B cell (primary cell): ENCODE measurements at regions of chr1 and their contacts with region 1.

Region 1: DNA sequence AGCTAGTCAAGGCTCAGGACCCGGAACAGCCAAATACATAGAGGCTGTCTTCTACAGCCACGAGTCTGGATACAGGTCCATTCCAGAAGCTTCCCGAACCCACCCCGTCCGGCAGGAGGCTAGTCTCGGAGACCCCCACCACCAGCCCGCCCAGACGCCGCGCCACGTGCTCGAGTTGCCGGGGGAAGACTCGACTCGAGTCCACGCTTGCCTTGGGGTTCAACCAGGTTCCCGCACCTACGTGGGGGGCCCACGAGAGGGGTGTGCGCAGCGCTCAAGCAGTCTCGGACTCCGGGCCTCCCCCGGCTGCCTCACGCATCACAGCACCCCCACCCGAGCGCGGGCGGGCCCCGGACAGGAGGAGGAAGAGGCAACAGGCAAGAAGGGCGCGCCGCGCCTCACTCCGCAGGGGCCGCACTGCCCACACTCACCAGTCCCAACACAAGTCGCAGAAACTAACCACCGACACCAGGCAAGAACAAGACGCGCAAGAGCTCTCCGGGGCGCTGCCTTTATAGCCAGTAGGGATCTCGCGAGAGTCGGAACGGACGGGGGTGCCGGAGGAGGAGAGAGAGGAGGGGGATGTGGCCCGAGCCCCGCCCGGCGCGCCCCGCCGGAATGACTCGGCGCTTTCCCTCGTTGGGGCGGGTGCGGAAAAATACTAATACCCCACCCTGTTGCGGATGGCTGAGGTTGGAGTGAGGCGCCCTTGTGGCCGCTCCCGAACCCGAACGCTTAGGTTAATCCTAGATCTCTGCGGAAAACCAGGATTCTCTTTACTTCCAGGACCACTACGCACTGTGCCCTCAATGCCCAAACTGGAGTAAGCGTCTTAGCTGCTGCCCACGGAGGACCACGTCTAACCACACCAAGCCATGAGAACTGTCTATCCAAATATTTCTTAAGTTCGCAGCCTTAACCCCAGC is at the start of gene PRDX1:
- DNase-seq: peak; percentile 98
- ATAC-seq: peak; percentile 86
- H3K4me3 ChIP-seq: peak within 1 kb of the TSS; percentile 75 to 97 (median 82)
- H3K4me3 Mint-ChIP-seq: peak within 1 kb of the TSS; percentile 95
- H3K27ac ChIP-seq: peak within 1 kb of the TSS; percentile 80 to 82
- H3K27ac Mint-ChIP-seq: peak within 1 kb of the TSS; percentile 98
- H3K4me1 ChIP-seq: peaks cover 16 to 31% of the 10 kb centered on the region in 2 donors
- H3K4me1 Mint-ChIP-seq: peaks cover 34% of the 10 kb centered on the region
- H3K27me3 ChIP-seq: no peaks in the 10 kb centered on the region
- H3K27me3 Mint-ChIP-seq: no peaks in the 10 kb centered on the region
- CTCF ChIP-seq: no peak
- total RNA-seq, gene PRDX1: 96.5 and 104 TPM in 2 replicates

Region 2: GRCh38 chr1:45543581-45544417 is 22.1 kb after region 1 on chr1:
- CTCF ChIA-PET with region 1: interaction called, 4 read pairs
- POLR2A ChIA-PET with region 1: interaction called, 15 read pairs
- intact Hi-C with region 1: no loop called
- DNase-seq: peak; percentile 94
- ATAC-seq: peak; percentile 90
- H3K4me3 ChIP-seq: peak overlapping the region in 4 of 5 experiments; percentile 22 to 56 (median 30)
- H3K4me3 Mint-ChIP-seq: peak overlapping the region; percentile 81
- H3K27ac ChIP-seq: peak overlapping the region; percentile 78 to 97
- H3K27ac Mint-ChIP-seq: peak overlapping the region; percentile 82
- H3K4me1 ChIP-seq: peaks cover 38 to 57% of the 10 kb centered on the region in 2 donors
- H3K4me1 Mint-ChIP-seq: peaks cover 46% of the 10 kb centered on the region
- H3K27me3 ChIP-seq: no peaks in the 10 kb centered on the region
- H3K27me3 Mint-ChIP-seq: no peaks in the 10 kb centered on the region
- CTCF ChIP-seq: no peak

Region 3: DNA sequence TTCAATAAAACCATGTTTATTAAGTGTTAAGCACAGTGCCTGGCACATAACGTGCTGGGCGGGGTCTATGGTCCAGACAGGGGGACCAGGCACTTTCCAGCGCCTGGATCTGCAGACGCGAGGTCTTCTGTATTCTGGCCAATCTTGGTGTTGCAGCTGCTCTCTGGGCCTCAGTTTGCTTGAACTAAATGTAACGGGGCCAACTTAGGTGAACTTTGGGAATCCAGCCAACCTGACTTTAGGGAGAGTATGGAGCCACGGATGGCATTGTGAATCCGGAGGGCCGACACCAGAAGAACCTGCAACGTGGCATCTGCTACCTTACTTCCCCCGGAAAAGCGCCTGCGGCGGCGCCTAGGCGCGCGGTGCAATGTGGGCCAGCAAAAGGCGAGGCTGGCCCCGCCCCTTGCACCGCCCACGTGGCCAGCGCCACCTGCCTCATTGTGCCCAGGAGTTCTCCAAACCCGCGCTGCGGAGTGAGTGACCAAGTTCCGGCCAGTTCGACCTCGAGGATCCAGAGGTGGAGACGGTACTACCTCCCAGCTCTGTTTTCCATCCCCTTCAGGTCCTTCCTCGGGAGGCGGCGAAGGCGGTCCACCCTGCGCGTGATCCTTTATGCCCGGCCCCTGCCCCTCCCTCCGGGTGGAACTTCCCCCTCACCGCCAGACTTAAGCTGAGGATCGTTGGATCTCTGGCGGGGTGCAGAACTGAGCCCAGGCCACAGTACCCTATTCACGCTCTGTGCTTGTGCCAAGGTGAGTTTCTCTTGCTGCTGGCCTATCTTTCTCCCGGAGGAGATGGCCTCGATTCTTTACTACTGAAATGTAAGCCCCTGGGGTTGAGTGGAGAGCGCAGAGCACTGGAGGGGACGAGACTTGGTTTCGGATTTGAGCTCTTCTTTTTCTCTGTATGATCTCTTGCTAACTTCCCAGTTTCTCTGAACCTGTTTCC is 29.0 kb after region 1 on chr1 and contains the start of gene AKR1A1:
- CTCF ChIA-PET with region 1: interaction called, 4 read pairs
- POLR2A ChIA-PET with region 1: interaction called, 27 read pairs
- intact Hi-C with region 1: loop called (anchors 1 kb)
- DNase-seq: peak; percentile 96
- ATAC-seq: peak; percentile 93
- H3K4me3 ChIP-seq: peak within 1 kb of the TSS; percentile 65 to 100 (median 90)
- H3K4me3 Mint-ChIP-seq: peak within 1 kb of the TSS; percentile 97
- H3K27ac ChIP-seq: peak within 1 kb of the TSS; percentile 84 to 96
- H3K27ac Mint-ChIP-seq: peak within 1 kb of the TSS; percentile 96
- H3K4me1 ChIP-seq: peaks cover 23 to 28% of the 10 kb centered on the region in 2 donors
- H3K4me1 Mint-ChIP-seq: peaks cover 30% of the 10 kb centered on the region
- H3K27me3 ChIP-seq: no peaks in the 10 kb centered on the region
- H3K27me3 Mint-ChIP-seq: no peaks in the 10 kb centered on the region
- CTCF ChIP-seq: no peak
- total RNA-seq, gene AKR1A1: 101 and 145 TPM in 2 replicates